ENCODE measurements at regions of chr22 and their contacts with region 1.

Region 1: GRCh38 chr22:20156611-20157429 is 6.0 kb upstream of the CCDC188 start:
- DNase-seq: peak; percentile 89
- H3K4me3 ChIP-seq: no peak overlapping the region
- H3K27ac ChIP-seq: no peak overlapping the region
- H3K4me1 ChIP-seq: peaks cover 0 to 7% (median 0%) of the 10 kb centered on the region in 4 donors
- H3K27me3 ChIP-seq: peaks cover 27% of the 10 kb centered on the region
- CTCF ChIP-seq: peak; percentile 98 to 100 (median 99)
- EP300 ChIP-seq: no peak
- POLR2A ChIP-seq: no peak

Region 2: DNA sequence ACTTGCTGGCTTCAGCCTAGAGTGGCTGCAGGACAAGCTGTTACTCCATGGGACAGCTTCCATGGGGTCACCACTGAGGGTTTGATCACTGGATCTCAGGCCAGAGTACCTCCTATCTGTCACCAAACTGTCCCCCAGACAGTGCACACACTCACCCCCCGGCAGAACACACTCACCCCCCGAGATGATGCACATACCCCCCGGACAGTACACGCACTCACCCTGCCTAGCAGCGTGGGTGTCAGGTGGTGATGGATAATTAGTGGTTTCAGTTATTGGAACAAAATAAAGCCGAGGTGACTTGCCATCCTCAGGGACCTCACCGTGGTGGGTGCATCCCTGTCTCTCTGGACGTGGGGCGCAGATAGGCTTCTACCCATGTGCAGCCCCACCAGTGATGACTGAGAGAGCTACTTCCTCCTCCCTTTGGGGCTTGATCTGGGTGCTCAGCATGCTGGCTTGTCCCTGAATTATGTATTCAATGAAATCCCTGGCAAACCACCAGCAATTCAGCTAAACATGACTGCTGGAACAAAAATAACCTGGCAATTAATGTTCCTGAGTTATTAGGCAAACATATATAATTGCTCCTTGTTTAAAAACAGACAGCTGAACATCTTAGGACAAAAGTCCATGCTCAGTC is 117.0 kb before region 1 on chr22:
- in situ Hi-C with region 1: no loop called
- intact Hi-C with region 1: no loop called
- DNase-seq: no peak
- H3K4me3 ChIP-seq: no peak overlapping the region
- H3K27ac ChIP-seq: no peak overlapping the region
- H3K4me1 ChIP-seq: no peaks in the 10 kb centered on the region
- H3K27me3 ChIP-seq: no peaks in the 10 kb centered on the region
- CTCF ChIP-seq: no peak
- EP300 ChIP-seq: no peak
- POLR2A ChIP-seq: no peak

Region 3: DNA sequence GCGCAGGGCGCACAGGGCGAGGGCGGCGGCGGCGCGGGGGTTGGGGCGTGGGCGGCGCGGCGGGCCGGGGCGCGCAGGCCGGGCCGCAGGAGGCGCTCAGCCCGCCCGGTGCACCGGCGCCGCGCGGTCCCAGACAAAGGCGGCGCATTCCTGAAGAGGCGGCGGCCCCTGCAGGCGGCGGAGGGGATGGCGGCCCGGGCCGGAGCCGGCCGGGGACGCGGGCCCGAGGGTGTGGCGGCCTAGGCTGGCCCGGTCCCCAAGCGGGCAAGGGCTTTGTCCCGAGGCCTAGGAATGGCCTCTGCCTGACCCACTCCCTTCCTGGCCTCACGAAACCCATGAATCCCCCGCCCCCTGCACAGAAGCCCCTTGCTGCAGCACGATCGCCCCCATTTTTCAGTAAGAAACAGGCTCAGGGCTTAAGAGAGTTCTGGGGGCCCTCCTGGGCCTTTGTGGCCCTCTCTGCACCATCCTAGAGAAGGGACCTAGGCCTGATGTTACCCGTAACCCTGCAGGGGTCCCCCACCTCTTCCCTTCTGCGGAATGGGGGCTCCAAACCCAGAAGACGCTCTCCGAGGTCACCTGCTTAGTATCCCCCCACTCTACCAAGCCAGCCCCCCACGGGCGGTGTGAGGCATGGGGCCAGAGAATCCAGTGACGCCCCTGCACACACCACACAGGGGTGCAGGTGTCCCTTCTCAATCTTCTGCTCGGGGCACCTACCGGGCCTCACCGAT is 111.6 kb after region 1 on chr22 and contains the start of gene RTN4R:
- in situ Hi-C with region 1: no loop called
- intact Hi-C with region 1: loop called (anchors 5 kb)
- DNase-seq: peak; percentile 68
- H3K4me3 ChIP-seq: peak within 1 kb of the TSS in 3 of 4 donors; percentile 54 to 63 (median 57)
- H3K27ac ChIP-seq: peak within 1 kb of the TSS in 3 of 4 donors; percentile 55 to 69 (median 63)
- H3K4me1 ChIP-seq: peaks cover 0 to 14% (median 12%) of the 10 kb centered on the region in 4 donors
- H3K27me3 ChIP-seq: peaks cover 9% of the 10 kb centered on the region
- CTCF ChIP-seq: peak in 4 of 5 experiments; percentile 50 to 69 (median 56)
- EP300 ChIP-seq: no peak
- POLR2A ChIP-seq: no peak
- total RNA-seq, gene RTN4R: 0.64 to 22.8 (median 3.0) TPM in 3 of 4 donors, not detected in the other

Region 4: GRCh38 chr22:20279662-20280134 is 122.9 kb after region 1 on chr22:
- in situ Hi-C with region 1: loop called in 1 of 4 experiments (anchors 5 kb)
- intact Hi-C with region 1: loop called (anchors 2 kb)
- DNase-seq: no peak
- H3K4me3 ChIP-seq: no peak overlapping the region
- H3K27ac ChIP-seq: no peak overlapping the region
- H3K4me1 ChIP-seq: no peaks in the 10 kb centered on the region
- H3K27me3 ChIP-seq: no peaks in the 10 kb centered on the region
- CTCF ChIP-seq: no peak
- EP300 ChIP-seq: no peak
- POLR2A ChIP-seq: no peak

Region 5: GRCh38 chr22:20292673-20293232 is 135.9 kb after region 1 on chr22:
- in situ Hi-C with region 1: loop called in 3 of 4 experiments (anchors 5 to 10 kb)
- intact Hi-C with region 1: no loop called
- DNase-seq: no peak
- H3K4me3 ChIP-seq: no peak overlapping the region
- H3K27ac ChIP-seq: no peak overlapping the region
- H3K4me1 ChIP-seq: no peaks in the 10 kb centered on the region
- H3K27me3 ChIP-seq: no peaks in the 10 kb centered on the region
- CTCF ChIP-seq: no peak
- EP300 ChIP-seq: no peak
- POLR2A ChIP-seq: no peak

Region 6: DNA sequence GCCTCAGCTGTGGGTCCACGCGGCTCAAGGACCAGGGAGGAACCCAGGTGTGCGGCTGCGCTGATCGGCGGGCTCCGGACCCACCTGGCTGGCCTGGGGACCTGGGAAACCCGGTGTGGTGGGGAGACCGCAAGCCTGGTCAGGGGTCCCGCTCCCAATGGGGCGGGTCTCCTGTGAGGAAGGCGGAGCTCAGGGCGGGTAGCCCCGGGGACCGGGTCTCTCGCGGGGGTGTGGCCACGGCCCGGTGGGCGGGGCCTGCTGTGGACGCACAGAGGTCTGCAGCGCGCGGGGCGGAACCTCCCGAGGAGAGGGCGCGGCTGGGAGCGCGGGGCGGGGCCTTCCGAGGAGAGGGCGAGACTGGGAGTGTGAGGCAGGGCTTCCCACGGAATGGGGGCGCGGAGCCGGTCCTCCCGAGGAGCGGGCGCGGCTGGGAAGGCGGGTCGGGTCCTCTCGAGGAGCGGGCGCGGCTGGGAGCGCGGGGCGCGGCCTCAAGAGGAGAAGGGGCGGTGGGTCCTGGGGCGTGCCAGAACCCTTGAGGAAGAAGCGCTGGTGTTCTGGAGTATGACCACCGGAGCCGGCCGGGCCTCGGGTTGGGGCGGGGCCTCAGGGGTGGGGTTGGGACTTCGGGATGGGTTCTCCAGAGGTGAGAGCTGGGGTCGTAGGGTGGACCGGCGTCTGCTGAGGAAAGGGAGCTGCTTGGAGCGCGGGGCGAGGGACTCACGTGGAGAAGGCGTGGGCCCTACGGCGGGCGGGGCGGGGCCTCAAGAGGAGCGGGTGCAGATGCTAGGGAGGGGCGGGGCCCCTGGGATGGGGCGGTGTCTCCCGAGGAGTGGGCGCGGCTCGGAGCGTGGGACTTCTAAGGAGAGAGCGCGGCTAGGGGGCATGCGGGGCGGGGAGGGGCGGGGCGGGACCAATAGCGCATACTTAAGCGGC is 142.2 kb after region 1 on chr22:
- in situ Hi-C with region 1: loop called in 3 of 4 experiments (anchors 5 to 10 kb)
- intact Hi-C with region 1: no loop called
- DNase-seq: peak; percentile 90
- H3K4me3 ChIP-seq: peak overlapping the region; percentile 26 to 58 (median 52)
- H3K27ac ChIP-seq: peak overlapping the region; percentile 19 to 53 (median 36)
- H3K4me1 ChIP-seq: peaks cover 0 to 15% (median 14%) of the 10 kb centered on the region in 4 donors
- H3K27me3 ChIP-seq: peaks cover 38% of the 10 kb centered on the region
- CTCF ChIP-seq: no peak
- EP300 ChIP-seq: no peak
- POLR2A ChIP-seq: no peak

Region 7: DNA sequence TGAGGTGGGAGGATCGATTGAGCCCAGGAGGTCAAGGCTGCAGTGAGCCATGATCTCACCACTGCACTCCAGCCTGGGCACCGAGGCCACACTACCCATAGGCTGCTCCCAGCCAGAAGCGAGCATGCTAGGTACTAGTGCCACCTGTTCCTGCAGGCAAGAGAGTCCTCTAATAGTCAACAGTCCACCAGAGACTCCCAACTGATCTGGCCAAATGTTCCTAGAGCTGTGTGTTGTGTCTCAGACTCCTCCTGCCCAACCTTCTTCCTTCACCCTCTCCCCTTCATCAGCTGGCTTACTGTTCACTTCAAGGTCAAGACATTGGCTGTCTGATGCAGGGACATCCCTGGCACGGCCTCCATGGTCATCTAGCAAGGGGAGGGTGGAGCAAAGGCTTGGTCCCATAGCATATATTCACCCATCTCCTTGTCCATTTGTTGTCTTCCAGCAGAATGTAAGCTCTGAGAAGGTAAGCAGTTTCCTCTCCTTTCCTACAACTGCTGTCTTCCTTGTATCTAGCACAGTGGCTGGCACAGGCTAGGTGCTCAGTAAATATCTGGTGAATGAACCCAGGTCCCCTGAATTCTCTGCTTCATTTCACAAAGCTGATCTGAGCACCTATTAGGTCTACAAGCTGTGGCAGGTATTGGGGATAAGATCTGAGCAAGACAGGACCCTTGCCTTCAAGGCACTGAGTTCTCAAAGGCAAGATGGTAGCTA is 490.9 kb after region 1 on chr22:
- in situ Hi-C with region 1: loop called in 1 of 4 experiments (anchors 25 kb)
- intact Hi-C with region 1: no loop called
- DNase-seq: no peak
- H3K4me3 ChIP-seq: no peak overlapping the region
- H3K27ac ChIP-seq: no peak overlapping the region
- H3K4me1 ChIP-seq: no peaks in the 10 kb centered on the region
- H3K27me3 ChIP-seq: no peaks in the 10 kb centered on the region
- CTCF ChIP-seq: no peak
- EP300 ChIP-seq: no peak
- POLR2A ChIP-seq: no peak